GM12878 (cell line): ENCODE measurements at regions of chr5 and their contacts with region 1.

Region 1: GRCh38 chr5:148957591-148958202 is 105.2 kb downstream of the SH3TC2 start:
- DNase-seq: no peak
- ATAC-seq: peak; percentile 82
- H3K4me3 ChIP-seq: no peak overlapping the region
- H3K27ac ChIP-seq: no peak overlapping the region
- H3K4me1 ChIP-seq: no peaks in the 10 kb centered on the region
- H3K27me3 ChIP-seq: no peaks in the 10 kb centered on the region
- CTCF ChIP-seq: peak; percentile 75 to 87 (median 77)
- EP300 ChIP-seq: no peak
- POLR2A ChIP-seq: no peak
- RAD21 ChIP-seq: peak; percentile 83

Region 2: DNA sequence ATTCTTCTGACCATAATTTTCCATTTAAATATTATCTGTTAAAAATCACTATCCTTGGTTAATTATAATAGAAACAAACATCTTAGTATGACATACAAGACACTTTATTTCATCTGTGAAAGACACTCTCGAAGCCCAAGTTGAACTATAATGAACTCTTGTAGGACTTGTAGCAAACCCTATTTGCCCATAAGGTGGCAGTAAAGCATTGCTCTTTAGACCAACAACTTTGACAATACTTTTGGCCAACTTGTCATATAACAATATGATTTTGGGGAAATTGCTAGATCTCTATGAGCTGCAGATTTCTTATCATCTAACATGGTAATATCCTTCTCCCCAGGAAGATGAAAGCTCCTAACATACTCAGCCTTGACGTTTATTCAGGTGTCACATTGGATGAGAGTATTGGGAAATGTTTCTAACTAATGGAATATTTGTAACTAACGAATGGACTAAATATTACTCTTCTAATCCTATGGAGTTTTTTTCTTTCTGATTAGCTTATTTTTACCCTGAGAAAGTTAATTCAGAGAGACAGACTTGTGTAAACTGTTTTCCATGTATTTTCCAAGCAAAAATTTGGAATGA is 778.4 kb before region 1 on chr5:
- CTCF ChIA-PET with region 1: no interaction called
- POLR2A ChIA-PET with region 1: no interaction called
- RAD21 ChIA-PET with region 1: no interaction called
- SMC1A ChIA-PET with region 1: no interaction called
- in situ Hi-C with region 1: no loop called
- intact Hi-C with region 1: loop called (anchors 5 kb)
- DNase-seq: peak; percentile 4
- ATAC-seq: peak; percentile 77
- H3K4me3 ChIP-seq: no peak overlapping the region
- H3K27ac ChIP-seq: no peak overlapping the region
- H3K4me1 ChIP-seq: no peaks in the 10 kb centered on the region
- H3K27me3 ChIP-seq: no peaks in the 10 kb centered on the region
- CTCF ChIP-seq: peak; percentile 57 to 75 (median 61); a peak in 5 of 6 replicates
- EP300 ChIP-seq: no peak
- POLR2A ChIP-seq: no peak
- RAD21 ChIP-seq: peak; percentile 87

Region 3: GRCh38 chr5:148615644-148616275 is 341.9 kb before region 1 on chr5:
- CTCF ChIA-PET with region 1: no interaction called
- POLR2A ChIA-PET with region 1: no interaction called
- RAD21 ChIA-PET with region 1: no interaction called
- SMC1A ChIA-PET with region 1: no interaction called
- in situ Hi-C with region 1: no loop called
- intact Hi-C with region 1: no loop called
- DNase-seq: no peak
- ATAC-seq: no peak
- H3K4me3 ChIP-seq: no peak overlapping the region
- H3K27ac ChIP-seq: no peak overlapping the region
- H3K4me1 ChIP-seq: no peaks in the 10 kb centered on the region
- H3K27me3 ChIP-seq: peaks cover 0 to 3% of the 10 kb centered on the region in 2 experiments; a peak in 1 of 4 replicates
- CTCF ChIP-seq: no peak
- EP300 ChIP-seq: no peak
- POLR2A ChIP-seq: no peak
- RAD21 ChIP-seq: no peak

Region 4: GRCh38 chr5:148746826-148747535 is 210.7 kb before region 1 on chr5:
- CTCF ChIA-PET with region 1: interaction called, 523 read pairs
- POLR2A ChIA-PET with region 1: no interaction called
- RAD21 ChIA-PET with region 1: interaction called, 104 read pairs
- SMC1A ChIA-PET with region 1: interaction called, 143 read pairs
- in situ Hi-C with region 1: no loop called
- intact Hi-C with region 1: no loop called
- DNase-seq: no peak
- ATAC-seq: peak; percentile 90
- H3K4me3 ChIP-seq: no peak overlapping the region
- H3K27ac ChIP-seq: no peak overlapping the region
- H3K4me1 ChIP-seq: peaks cover 9% of the 10 kb centered on the region
- H3K27me3 ChIP-seq: no peaks in the 10 kb centered on the region
- CTCF ChIP-seq: no peak
- EP300 ChIP-seq: no peak
- POLR2A ChIP-seq: no peak
- RAD21 ChIP-seq: no peak

Region 5: GRCh38 chr5:148760945-148761638 is 196.6 kb before region 1 on chr5:
- CTCF ChIA-PET with region 1: interaction called, 10 read pairs
- POLR2A ChIA-PET with region 1: no interaction called
- RAD21 ChIA-PET with region 1: no interaction called
- SMC1A ChIA-PET with region 1: interaction called, 4 read pairs
- in situ Hi-C with region 1: no loop called
- intact Hi-C with region 1: no loop called
- DNase-seq: peak; percentile 59
- ATAC-seq: peak; percentile 100
- H3K4me3 ChIP-seq: no peak overlapping the region
- H3K27ac ChIP-seq: no peak overlapping the region
- H3K4me1 ChIP-seq: peaks cover 8% of the 10 kb centered on the region
- H3K27me3 ChIP-seq: no peaks in the 10 kb centered on the region
- CTCF ChIP-seq: no peak
- EP300 ChIP-seq: no peak
- POLR2A ChIP-seq: no peak
- RAD21 ChIP-seq: no peak

Region 6: GRCh38 chr5:148820461-148821395 is 137.0 kb before region 1 on chr5:
- CTCF ChIA-PET with region 1: interaction called, 35 read pairs
- POLR2A ChIA-PET with region 1: no interaction called
- RAD21 ChIA-PET with region 1: interaction called, 6 read pairs
- SMC1A ChIA-PET with region 1: interaction called, 10 read pairs
- in situ Hi-C with region 1: no loop called
- intact Hi-C with region 1: no loop called
- DNase-seq: no peak
- ATAC-seq: peak; percentile 76
- H3K4me3 ChIP-seq: no peak overlapping the region
- H3K27ac ChIP-seq: no peak overlapping the region
- H3K4me1 ChIP-seq: peaks cover 5% of the 10 kb centered on the region
- H3K27me3 ChIP-seq: no peaks in the 10 kb centered on the region
- CTCF ChIP-seq: peak; percentile 49 to 59 (median 59); a peak in 5 of 6 replicates
- EP300 ChIP-seq: no peak
- POLR2A ChIP-seq: no peak
- RAD21 ChIP-seq: peak; percentile 41

Region 7: DNA sequence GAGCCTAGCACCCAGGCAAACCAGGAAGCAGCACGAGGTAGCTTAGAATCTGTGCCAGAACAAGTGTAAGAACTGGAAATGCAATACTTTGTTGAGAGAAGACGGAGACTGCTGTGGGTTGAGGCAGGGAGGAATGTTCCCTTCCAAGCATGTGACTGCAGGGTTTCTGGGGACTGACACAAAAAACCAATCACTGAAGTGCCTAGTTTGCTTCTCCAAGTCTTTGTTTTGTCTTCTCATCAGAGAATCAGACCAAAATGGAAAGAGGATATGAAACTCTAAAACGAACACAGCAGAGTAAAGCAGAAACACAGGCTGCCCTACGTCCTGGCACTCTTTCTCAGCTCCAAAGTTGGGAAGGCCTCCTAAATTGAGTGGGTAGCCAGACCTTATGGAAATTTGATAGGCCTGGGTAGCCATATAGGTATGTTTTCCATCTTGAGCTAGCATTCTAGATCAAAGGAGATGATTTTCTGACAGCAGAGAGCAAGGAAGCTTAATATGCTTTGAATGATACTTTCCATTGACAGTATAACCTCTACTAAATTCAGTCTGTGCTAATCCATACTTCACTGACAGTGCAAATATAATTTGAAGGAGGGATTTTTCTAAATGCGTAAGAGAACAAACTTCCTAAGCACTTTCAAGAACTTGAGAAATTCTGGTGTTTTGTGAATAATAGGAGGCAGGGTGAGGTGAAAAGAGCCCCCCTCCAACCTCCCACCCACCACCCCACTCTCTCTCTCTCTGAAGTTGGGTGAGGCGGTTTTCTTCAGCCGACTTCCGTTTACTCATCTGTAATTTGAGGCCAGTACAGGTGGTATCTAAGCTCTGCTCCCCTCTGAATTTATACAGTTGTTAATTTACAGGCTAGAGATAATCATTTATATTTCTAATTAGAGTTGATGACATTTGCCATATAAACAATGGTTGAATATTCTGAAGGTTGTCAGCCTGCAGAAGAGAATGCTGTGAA is 125.8 kb before region 1 on chr5:
- CTCF ChIA-PET with region 1: interaction called, 4 read pairs
- POLR2A ChIA-PET with region 1: no interaction called
- RAD21 ChIA-PET with region 1: interaction called, 5 read pairs
- SMC1A ChIA-PET with region 1: interaction called, 4 read pairs
- in situ Hi-C with region 1: no loop called
- intact Hi-C with region 1: loop called (anchors 5 kb)
- DNase-seq: peak; percentile 59
- ATAC-seq: peak; percentile 92
- H3K4me3 ChIP-seq: 0 out of 2 replicates have a peak overlapping the region, but pooled peaks have one; percentile 28
- H3K27ac ChIP-seq: peak overlapping the region; percentile 40
- H3K4me1 ChIP-seq: peaks cover 31% of the 10 kb centered on the region
- H3K27me3 ChIP-seq: no peaks in the 10 kb centered on the region; a peak in 1 of 4 replicates
- CTCF ChIP-seq: no peak
- EP300 ChIP-seq: peak in 1 of 2 experiments; percentile 76; a peak in 2 of 4 replicates
- POLR2A ChIP-seq: no peak
- RAD21 ChIP-seq: no peak

Region 8: GRCh38 chr5:148984333-148984732 is 26.6 kb after region 1 on chr5:
- CTCF ChIA-PET with region 1: interaction called, 27 read pairs
- POLR2A ChIA-PET with region 1: no interaction called
- RAD21 ChIA-PET with region 1: interaction called, 3 read pairs
- SMC1A ChIA-PET with region 1: interaction called, 3 read pairs
- in situ Hi-C with region 1: no loop called
- intact Hi-C with region 1: no loop called
- DNase-seq: no peak
- ATAC-seq: no peak
- H3K4me3 ChIP-seq: no peak overlapping the region
- H3K27ac ChIP-seq: no peak overlapping the region
- H3K4me1 ChIP-seq: no peaks in the 10 kb centered on the region
- H3K27me3 ChIP-seq: peaks cover 0 to 1% of the 10 kb centered on the region in 2 experiments; a peak in 3 of 4 replicates
- CTCF ChIP-seq: no peak
- EP300 ChIP-seq: no peak
- POLR2A ChIP-seq: no peak
- RAD21 ChIP-seq: no peak